ENCODE measurements at regions of chr19 and their contacts with region 1.

Region 1: GRCh38 chr19:48835734-48836088 is 580 bp downstream of the HSD17B14 start:
- DNase-seq: peak; percentile 89 to 98
- H3K4me3 ChIP-seq: peak overlapping the region; percentile 59 to 67
- H3K27ac ChIP-seq: peak overlapping the region; percentile 88 to 94
- H3K4me1 ChIP-seq: peaks cover 3 to 8% of the 10 kb centered on the region in 2 donors
- H3K27me3 ChIP-seq: no peaks in the 10 kb centered on the region
- CTCF ChIP-seq: peak; percentile 82 to 96 (median 85)

Region 2: DNA sequence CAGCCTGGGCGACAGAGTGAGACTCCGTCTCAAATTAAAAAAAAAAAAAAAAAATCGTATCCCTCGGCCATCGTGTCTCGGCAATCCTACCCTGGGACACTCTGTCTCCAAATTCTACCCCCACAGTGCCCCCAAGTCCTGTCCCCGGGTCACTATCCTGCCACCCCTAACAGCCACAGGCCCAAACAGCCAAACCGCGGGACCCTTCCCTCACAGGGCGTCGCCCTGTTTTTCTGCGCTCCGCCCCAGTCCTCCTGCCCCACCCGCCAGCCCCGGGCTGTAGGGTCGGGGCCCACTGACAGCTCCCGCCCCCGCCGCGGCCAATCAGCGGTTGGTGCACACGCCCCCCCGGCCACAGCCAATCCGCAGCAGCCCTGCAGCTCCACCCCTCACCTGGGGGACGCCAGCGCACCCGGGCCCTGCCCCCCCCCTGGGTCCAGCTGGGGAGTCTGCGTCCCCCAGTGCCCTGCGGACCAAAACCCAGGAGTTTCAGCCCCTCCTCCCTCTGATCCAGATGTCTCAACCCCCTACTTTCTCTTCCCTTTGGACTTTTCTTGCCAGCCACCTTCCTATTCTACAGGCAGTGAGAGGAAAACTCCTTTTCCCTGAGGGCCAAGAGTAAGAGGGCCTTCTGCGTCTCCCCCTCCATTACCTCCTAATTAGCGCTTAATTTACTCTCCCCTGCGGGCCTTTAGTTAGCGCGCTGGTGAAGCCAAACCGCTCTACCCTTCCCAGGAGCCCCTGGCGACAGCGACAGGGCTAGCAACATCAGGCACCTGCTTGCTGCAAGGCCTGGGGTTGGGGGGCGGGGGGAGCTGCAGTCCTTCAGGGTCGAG is 23.4 kb before region 1 on chr19:
- intact Hi-C with region 1: loop called (anchors 1 kb)
- DNase-seq: peak; percentile 66 to 94
- H3K4me3 ChIP-seq: peak overlapping the region; percentile 71 to 82
- H3K27ac ChIP-seq: peak overlapping the region; percentile 91 to 94
- H3K4me1 ChIP-seq: peaks cover 0 to 12% of the 10 kb centered on the region in 2 donors
- H3K27me3 ChIP-seq: no peaks in the 10 kb centered on the region
- CTCF ChIP-seq: no peak